ENCODE measurements at regions of chr15 and their contacts with region 1.

Region 1: DNA sequence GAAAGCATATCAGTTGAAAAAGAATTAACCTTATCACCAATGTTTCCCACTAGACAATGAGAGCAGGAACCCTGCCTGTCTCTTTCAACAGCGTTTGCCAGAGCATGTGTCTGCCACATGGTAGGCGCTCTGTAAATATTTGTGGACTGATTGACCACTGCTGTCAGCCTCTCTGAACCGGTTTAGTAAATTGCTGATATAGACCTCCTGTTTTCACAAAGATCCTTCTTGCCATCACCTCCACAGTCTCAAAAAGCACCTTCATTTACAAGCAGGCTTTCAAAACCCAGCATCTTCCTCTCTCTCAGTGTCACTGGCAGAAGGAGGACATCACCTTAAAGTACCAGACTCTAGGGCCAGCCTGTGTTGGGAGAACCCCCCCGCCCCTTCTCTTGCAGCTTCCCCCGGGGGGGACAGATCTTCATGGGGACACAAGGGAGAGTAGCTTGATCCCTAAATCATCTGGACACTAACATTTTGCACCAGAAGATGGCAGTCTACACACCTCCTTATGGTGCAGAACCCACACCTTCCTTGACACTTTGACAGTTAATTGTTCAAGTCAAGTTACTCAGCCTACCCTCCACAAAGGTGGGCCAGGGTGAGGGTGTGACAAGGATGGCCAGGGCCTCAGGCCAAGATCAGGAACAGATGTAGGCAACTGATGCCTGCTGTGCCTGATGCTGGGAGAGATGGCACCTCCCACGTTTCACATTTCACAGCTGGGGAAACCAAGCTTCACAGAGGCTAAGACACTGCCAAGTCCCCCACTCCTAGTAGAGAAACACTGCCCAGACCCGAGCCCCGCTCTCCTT is 37.8 kb upstream of the USP3 start:
- DNase-seq: peak; percentile 87
- H3K4me3 ChIP-seq: no peak overlapping the region
- H3K27ac ChIP-seq: no peak overlapping the region
- H3K4me1 ChIP-seq: peaks cover 37% of the 10 kb centered on the region
- CTCF ChIP-seq: peak; percentile 88

Region 2: DNA sequence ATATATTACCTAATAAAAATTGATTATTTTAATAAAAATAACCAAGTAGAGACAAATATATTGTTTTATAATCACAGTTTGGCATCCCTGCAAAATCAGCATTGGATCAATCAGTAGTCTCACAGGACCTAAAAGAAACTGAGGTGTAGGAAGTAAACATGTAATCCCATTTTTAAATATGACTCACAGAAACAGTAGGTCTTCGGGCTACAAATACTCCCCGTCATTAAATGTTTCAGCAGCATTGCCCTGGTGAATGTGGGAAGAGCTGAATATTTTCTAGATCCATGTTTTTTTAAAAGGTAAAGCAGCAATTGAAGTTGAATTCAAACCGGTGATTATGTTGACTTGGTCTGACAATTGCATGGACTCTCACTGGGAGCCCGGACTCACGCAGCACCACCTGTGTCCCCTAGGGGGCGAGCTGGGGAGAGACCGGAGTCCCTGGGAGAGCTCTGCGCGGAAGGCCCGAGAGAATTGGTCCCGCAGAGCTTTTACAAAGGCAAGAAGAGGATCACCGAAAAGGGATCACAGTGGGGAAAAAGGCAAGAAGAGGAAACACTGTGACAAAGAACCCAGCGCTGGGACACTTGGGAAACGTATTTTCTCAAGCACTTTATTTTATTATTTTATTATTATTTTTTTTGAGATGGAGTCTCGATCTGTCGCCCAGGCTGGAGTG is 20.6 kb after region 1 on chr15:
- CTCF ChIA-PET with region 1: interaction called, 11 read pairs
- POLR2A ChIA-PET with region 1: interaction called, 5 read pairs
- intact Hi-C with region 1: no loop called
- DNase-seq: peak; percentile 90
- H3K4me3 ChIP-seq: peak overlapping the region; percentile 48
- H3K27ac ChIP-seq: peak overlapping the region; percentile 83
- H3K4me1 ChIP-seq: peaks cover 72% of the 10 kb centered on the region
- CTCF ChIP-seq: peak; percentile 97

Region 3: GRCh38 chr15:63599401-63600000 is 132.9 kb after region 1 on chr15:
- CTCF ChIA-PET with region 1: no interaction called
- POLR2A ChIA-PET with region 1: interaction called, 3 read pairs
- intact Hi-C with region 1: loop called (anchors 2 kb)
- DNase-seq: peak; percentile 53
- H3K4me3 ChIP-seq: no peak overlapping the region
- H3K27ac ChIP-seq: no peak overlapping the region
- H3K4me1 ChIP-seq: peaks cover 61% of the 10 kb centered on the region
- CTCF ChIP-seq: peak; percentile 56

Region 4: DNA sequence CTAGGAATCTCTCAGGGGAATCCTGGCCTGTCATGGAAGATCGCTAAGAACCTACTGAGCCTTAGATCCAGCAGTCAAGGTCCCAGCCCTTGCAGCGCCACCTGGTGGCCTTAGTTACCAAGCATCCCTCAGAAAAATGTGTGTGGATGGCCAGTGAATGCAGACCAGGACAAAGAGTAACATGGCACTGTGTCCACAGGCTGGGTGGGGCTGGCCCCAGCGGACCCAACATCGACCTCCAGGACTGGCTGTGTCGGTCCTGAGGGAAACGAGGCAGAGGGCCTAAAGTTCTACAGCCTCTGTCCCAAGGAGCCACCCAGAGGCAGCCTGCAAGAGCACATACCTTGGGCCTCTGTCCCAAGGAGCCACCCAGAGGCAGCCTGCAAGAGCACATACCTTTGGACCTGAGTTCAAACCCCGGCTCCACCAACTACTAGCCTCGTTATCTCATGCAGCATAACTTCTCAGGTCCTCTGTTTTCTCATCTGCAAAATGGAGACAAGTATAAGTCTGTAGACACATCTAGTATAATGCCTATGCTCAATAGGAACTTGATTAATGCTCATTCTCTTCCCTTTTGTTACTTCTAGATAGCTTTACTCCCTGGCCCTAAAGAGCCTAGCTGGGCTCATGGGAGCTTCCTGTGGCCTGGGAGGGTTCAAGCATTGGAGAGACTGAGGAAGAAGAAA is 424.6 kb after region 1 on chr15:
- CTCF ChIA-PET with region 1: no interaction called
- POLR2A ChIA-PET with region 1: interaction called, 4 read pairs
- intact Hi-C with region 1: loop called (anchors 10 kb)
- DNase-seq: peak; percentile 75
- H3K4me3 ChIP-seq: no peak overlapping the region
- H3K27ac ChIP-seq: no peak overlapping the region
- H3K4me1 ChIP-seq: peaks cover 20% of the 10 kb centered on the region
- CTCF ChIP-seq: peak; percentile 99